ENCODE measurements at regions of chr11 and their contacts with region 1.

Region 1: GRCh38 chr11:36564376-36565030 is 3.3 kb upstream of the RAG1 start:
- DNase-seq: peak; percentile 70
- ATAC-seq: peak; percentile 56
- H3K4me3 Mint-ChIP-seq: peak overlapping the region; percentile 43
- H3K27ac Mint-ChIP-seq: no peak overlapping the region
- H3K4me1 Mint-ChIP-seq: peaks cover 5% of the 10 kb centered on the region
- H3K27me3 Mint-ChIP-seq: peaks cover 27% of the 10 kb centered on the region
- CTCF ChIP-seq: peak; percentile 72

Region 2: GRCh38 chr11:36577859-36578258 is 13.4 kb after region 1 on chr11:
- CTCF ChIA-PET with region 1: interaction called, 31 read pairs
- POLR2A ChIA-PET with region 1: interaction called, 5 read pairs
- intact Hi-C with region 1: no loop called
- DNase-seq: no peak
- ATAC-seq: no peak
- H3K4me3 Mint-ChIP-seq: no peak overlapping the region
- H3K27ac Mint-ChIP-seq: no peak overlapping the region
- H3K4me1 Mint-ChIP-seq: no peaks in the 10 kb centered on the region
- H3K27me3 Mint-ChIP-seq: peaks cover 13% of the 10 kb centered on the region
- CTCF ChIP-seq: no peak

Region 3: DNA sequence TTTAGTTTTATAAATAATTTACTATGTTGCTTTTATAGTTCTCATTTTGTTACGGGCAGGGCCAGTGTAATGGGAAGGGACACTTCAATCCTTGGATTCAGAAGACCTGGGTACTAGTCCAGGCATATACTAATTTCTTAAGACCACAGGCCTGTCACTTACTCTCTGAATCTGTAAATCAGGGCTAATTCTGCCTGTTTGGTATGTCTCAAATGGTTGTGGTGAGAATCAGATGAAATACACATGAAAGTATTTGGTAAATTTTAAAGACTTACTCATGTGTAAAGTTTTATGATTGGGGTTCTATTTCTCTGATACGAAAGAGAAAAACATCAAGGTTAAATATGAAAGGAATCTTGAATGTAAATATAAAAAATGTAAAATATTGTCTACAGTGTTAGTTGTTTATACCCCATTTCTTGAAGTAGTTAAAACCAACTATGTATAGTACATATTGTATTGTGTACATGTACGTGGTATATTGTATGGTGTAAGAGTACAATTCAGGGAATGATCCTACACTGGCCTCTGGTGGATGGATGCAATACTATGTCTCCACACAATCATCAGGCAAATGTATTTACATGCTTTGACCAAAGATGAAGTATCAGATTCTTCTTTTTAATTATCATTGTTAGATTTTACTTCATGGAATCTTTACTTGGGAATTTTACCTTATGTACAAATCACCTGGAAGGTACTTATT is 58.1 kb after region 1 on chr11:
- CTCF ChIA-PET with region 1: interaction called, 16 read pairs
- POLR2A ChIA-PET with region 1: no interaction called
- intact Hi-C with region 1: loop called (anchors 5 kb)
- DNase-seq: no peak
- ATAC-seq: no peak
- H3K4me3 Mint-ChIP-seq: no peak overlapping the region
- H3K27ac Mint-ChIP-seq: no peak overlapping the region
- H3K4me1 Mint-ChIP-seq: no peaks in the 10 kb centered on the region
- H3K27me3 Mint-ChIP-seq: peaks cover 11% of the 10 kb centered on the region
- CTCF ChIP-seq: no peak

Region 4: DNA sequence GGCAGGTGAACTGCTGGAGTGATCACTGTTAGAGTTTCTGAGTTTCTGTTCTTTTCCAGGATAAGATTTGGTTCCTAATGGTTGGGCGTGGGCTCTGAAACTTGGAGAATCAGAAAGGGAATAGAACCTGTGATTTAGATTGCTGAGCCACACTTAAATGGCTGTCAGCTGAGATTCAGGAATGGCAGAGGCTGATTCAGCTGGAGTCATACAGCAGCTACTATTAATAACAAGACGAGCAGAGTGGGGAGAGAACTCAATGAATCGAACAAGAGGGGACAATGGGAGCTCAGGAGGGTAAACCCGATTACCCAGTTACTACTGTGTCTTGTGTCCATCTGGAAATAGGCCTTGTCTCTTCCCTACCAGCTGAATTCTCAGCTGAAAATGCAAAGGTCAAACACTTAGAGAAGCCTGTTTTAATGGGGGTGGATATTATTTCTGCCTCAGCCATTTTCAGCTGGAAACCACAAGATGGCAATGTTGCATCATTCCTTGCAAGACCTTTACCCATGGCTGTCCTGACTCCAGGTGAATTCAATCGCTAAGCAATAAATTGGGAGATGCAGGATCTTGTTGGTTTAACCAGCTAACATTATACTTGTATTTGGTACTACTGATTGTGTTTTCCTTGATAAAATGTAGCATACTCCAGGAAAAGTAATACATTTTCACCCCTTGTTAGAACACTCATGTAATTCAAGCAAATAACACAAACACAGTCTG is 138.0 kb after region 1 on chr11:
- CTCF ChIA-PET with region 1: interaction called, 29 read pairs
- POLR2A ChIA-PET with region 1: no interaction called
- intact Hi-C with region 1: no loop called
- DNase-seq: peak; percentile 19
- ATAC-seq: no peak
- H3K4me3 Mint-ChIP-seq: no peak overlapping the region
- H3K27ac Mint-ChIP-seq: no peak overlapping the region
- H3K4me1 Mint-ChIP-seq: peaks cover 2% of the 10 kb centered on the region
- H3K27me3 Mint-ChIP-seq: peaks cover 20% of the 10 kb centered on the region
- CTCF ChIP-seq: peak; percentile 67

Region 5: DNA sequence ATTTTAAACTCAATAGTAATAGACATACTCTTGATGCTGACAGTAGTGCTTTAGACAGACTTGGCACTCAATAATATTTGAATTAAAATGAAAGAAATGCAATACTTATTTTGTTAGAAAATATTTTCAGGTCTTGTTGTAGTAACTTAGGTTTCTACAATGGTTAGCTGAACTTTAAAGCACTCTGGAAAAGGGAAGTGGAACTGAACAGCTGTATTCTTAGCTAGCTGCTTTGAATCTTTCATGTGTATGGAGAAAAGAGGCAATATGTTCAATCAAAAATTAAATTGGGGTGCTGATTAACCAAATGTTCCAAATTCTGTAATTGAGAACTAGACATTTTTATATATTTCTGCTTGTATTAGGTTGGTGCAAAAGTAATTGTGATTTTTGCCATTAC is 551.5 kb after region 1 on chr11:
- CTCF ChIA-PET with region 1: no interaction called
- POLR2A ChIA-PET with region 1: no interaction called
- intact Hi-C with region 1: no loop called
- DNase-seq: no peak
- ATAC-seq: no peak
- H3K4me3 Mint-ChIP-seq: no peak overlapping the region
- H3K27ac Mint-ChIP-seq: no peak overlapping the region
- H3K4me1 Mint-ChIP-seq: no peaks in the 10 kb centered on the region
- H3K27me3 Mint-ChIP-seq: no peaks in the 10 kb centered on the region
- CTCF ChIP-seq: no peak